Activated CD4-positive, alpha-beta T cell treated with anti-CD3 and anti-CD28 coated beads, Interleukin-2, amount 10 ng/mL, durations not matched to agents 24 days and 14 days (primary cell): ENCODE measurements at regions of chr18 and their contacts with region 1.

Region 1: DNA sequence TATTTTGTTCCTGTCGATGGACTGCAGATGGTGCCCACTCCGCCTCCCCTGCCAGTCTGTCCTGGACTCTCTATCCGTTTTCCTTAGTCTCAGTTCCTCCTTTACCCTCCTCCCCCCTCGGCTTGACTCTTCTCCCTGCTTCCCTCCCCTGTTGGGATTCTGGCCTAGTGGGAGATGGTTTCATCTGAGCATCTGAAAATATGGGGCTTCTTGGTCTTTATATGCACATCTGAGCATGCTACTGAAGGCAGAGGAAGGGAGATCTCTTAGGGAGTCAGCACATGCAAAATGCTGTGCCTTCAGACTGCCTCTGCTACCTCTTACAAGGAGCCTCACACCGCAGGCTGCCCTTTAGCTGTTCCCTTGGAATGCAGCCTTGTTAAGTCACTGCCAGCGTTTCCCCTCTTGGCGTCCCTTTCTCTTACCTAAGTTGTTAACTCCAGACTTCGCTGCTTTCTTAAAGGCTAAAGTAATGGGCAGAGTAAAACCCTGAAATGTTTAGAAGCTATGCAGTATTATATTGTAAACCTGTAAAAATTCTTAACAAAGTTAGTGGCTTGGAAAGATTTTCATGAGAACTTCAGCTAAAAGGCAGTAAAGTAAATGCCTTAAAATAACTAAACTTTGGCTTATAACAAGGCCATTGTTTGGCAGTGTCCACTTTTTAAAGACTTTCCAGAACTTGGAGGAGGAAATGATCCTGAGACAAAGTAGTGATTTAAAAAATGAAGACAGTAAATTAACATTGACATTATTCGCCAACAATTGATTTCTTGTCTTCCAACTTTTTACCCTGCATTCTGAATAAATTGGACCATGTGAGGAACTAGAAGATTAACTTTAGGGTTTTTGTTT is 49.8 kb downstream of the LDLRAD4 start:
- DNase-seq: no peak
- H3K4me3 Mint-ChIP-seq: peak overlapping the region; percentile 76
- H3K27ac Mint-ChIP-seq: peak overlapping the region; percentile 90
- H3K4me1 Mint-ChIP-seq: peaks cover 64% of the 10 kb centered on the region
- H3K27me3 Mint-ChIP-seq: no peaks in the 10 kb centered on the region

Region 2: DNA sequence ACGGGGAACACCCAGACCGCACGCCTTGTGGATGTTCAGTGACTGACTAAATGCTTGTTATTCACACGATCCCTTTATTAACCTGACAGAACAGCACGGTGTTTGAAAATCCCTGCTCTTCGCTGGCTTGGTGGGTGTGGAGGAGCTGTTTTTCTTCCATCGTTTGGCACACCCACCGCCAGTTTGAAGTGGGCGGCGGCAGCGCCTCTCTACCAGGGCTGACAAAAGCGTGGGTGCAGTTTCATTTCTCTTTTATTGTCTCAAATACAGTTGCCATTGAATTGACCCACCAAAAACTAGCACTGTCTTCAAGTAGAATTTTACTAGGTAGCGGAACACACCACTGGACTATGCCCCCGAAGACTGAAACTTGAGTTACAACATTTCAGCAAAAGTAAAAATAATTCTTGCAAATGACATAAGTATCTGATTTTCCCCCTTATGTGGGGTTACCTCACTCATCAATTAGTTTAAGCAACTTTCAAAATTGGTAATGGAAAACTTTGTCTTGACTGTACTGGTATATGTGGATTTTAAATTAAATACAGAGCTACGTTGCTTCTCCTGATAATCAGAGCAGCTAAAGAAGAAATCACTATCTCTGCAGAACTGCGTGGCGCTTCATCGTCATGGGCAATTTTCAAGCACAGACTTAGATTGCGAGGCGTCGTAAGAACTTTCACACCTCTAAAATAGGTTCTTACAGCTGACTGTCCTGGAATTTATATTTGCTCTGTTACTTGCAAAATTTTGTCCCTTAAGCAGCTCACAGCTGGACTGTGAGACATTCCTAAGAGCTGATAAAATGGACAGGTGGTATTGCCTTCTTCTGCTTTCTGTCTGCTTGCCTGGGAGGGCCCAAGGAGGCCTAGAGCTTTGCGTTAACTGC is 11.0 kb after region 1 on chr18:
- intact Hi-C with region 1: loop called (anchors 1 kb)
- DNase-seq: peak; percentile 72
- H3K4me3 Mint-ChIP-seq: peak overlapping the region; percentile 75
- H3K27ac Mint-ChIP-seq: peak overlapping the region; percentile 79
- H3K4me1 Mint-ChIP-seq: peaks cover 59% of the 10 kb centered on the region
- H3K27me3 Mint-ChIP-seq: no peaks in the 10 kb centered on the region

Region 3: DNA sequence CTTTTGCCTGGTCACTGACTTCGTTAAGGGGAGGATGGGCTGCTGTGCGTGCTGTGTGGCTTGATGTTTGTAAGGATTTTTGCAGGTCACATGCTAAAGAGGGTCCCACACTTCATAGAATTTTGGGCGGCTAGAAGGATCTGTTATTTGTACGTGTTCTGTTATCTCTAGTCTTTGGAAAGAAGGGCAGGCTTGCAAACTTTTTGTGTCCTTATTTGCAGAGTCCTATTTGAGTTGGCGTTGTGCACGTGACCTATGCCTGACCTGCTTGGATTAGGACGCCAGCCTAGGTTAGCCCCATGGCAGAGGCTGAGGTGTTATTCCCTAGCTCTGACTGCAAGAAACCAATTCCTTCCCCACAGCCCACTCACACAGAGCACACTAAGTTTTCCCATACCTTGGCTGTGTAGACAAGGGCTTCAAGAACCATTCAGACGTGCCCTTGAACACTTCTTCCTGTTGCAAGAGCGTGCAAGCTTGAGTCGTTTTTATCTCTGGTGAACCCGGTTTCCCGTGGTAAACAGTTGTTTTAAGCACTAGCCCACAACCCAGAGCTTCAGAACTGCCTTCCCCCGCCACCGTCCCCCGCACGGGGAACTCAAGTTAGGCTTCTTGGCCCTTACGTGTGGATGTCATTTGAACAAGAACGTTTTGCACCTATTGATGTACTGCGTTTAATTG is 44.8 kb after region 1 on chr18:
- intact Hi-C with region 1: loop called (anchors 5 kb)
- DNase-seq: peak; percentile 75
- H3K4me3 Mint-ChIP-seq: peak overlapping the region; percentile 34
- H3K27ac Mint-ChIP-seq: peak overlapping the region; percentile 64
- H3K4me1 Mint-ChIP-seq: peaks cover 34% of the 10 kb centered on the region
- H3K27me3 Mint-ChIP-seq: no peaks in the 10 kb centered on the region

Region 4: DNA sequence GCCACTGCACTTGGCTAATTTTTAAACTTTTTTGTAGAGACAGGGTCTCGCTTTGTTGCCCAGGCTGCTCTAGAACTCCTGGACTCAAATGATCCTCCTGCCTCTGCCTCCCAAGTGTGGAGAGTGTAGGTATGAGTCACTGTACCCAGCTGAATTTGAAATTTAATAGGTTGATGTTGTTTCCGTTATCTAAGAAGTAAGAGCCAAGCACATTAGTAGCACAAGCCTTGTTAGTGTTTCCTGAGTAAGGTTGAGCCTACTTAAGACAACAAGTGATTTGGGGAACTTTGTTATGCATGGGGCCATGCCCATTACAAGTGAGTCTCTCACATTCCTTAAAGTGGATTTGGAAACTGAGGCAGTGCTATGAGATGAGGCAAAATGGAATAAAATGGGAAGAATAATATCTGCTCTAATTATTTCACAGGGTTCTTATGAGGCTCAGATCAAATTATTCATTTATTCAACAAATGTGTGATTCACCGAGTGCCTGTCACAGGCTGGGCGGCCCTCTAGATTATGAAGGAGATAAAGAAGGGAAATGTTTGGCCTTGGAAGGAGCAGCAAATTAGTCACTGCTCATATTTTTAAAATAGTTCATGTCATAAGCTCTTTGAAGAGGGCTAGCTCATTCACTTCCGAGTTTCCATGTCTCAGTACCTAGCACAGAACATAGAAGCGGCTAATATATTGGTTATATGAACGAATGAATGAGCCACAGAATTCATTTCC is 167.4 kb after region 1 on chr18:
- intact Hi-C with region 1: loop called (anchors 1 kb)
- DNase-seq: no peak
- H3K4me3 Mint-ChIP-seq: no peak overlapping the region
- H3K27ac Mint-ChIP-seq: peak overlapping the region; percentile 4
- H3K4me1 Mint-ChIP-seq: peaks cover 58% of the 10 kb centered on the region
- H3K27me3 Mint-ChIP-seq: no peaks in the 10 kb centered on the region

Region 5: DNA sequence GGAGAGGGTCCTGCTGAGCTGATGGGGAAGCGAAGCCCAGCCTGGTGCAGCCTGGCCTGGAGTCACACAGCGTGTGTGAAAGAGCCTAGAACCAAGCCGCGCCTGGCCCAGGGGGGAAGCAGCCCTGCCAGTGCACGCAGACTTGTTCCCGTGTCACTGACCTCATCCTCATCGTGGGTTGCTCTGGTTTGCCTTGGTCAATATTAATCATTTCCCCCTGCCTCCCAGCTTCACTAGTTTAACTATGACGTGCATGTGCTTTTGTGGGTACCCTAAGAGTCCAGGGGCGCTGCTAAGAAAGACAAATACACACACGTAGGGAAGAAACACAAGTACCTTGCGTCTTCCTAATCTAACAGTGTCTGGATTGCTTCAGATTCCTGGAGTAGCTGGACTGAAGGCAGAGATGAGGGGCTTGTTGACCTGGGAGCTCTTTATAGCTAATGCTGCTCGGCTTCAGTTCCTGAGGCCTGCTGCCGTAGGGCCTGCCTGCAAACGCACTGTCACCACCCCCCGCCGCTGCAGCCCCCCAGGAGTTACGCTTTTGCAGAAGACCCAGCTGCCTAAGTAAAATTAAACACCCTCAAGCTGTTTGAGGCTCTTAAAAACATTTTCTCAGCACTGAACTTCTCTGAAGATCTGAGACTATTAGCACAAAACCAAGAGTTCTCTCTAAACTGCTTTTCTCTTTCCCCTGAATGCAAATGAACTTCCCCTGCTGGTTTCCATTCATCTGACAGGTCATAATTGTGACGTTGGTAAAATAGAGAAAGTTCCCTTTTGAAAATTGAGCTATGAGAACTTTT is 298.8 kb after region 1 on chr18:
- intact Hi-C with region 1: loop called (anchors 2 kb)
- DNase-seq: peak; percentile 65
- H3K4me3 Mint-ChIP-seq: peak overlapping the region; percentile 69
- H3K27ac Mint-ChIP-seq: peak overlapping the region; percentile 89
- H3K4me1 Mint-ChIP-seq: peaks cover 64% of the 10 kb centered on the region
- H3K27me3 Mint-ChIP-seq: no peaks in the 10 kb centered on the region

Region 6: DNA sequence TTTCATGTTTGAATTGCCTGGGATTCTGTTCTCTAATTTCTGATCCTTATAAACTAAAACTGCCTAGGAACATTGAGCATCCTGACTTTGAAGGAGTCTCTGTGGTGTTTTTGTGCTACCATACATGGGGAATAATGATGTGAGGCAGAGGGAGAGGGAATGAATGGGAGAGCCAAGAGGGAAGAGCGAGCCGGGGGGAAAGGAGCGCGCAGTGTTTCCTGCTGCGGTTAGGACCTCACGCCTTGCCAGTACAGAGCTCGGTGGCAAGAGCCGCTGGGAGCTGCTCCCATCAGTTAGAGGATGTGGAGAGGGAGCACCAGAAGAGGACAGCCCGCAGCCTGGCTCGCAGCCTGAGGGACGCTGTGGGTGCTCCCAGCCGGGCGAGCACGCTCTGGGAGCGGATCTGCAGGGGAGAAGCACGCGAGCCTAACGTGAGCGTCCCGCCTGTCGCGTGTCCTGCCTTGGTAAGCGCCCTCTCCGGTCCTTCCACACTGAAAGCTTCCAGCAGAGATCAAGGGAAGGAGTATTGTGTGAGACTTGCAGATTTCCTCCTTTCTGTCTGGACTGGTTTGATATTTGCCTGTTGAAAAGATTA is 343.3 kb after region 1 on chr18:
- intact Hi-C with region 1: loop called (anchors 2 kb)
- DNase-seq: no peak
- H3K4me3 Mint-ChIP-seq: peak overlapping the region; percentile 94
- H3K27ac Mint-ChIP-seq: peak overlapping the region; percentile 97
- H3K4me1 Mint-ChIP-seq: peaks cover 72% of the 10 kb centered on the region
- H3K27me3 Mint-ChIP-seq: no peaks in the 10 kb centered on the region